Posterior vena cava (tissue), 2 donors: ENCODE measurements at regions of chr2 and their contacts with region 1.

Region 1: GRCh38 chr2:191501561-191502168 is 176.3 kb upstream of the NABP1 start:
- DNase-seq: no peak

Region 2: DNA sequence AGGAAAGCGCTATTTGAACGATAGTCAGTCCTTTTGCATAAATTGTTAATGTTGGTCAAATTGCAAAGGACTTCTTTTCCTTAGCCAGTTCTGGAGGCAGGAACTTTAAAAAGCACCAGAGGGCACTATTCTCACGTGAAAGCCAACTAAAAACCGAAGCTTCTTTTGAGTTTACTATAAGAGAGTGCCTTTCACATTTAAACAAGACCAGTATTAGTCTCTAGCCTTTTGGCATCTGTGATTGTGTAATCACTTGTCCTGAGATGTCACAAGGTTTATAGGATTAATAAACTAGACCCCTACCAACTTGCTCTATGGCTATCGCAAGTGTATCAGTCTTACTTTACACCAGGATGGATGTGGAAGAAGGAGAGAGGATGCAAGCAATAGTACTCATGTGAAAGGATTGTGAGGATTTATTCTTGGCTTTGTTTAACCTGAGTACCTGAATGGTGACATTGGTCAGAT is 336.5 kb before region 1 on chr2:
- intact Hi-C with region 1: loop called (anchors 5 to 10 kb)
- DNase-seq: no peak

Region 3: DNA sequence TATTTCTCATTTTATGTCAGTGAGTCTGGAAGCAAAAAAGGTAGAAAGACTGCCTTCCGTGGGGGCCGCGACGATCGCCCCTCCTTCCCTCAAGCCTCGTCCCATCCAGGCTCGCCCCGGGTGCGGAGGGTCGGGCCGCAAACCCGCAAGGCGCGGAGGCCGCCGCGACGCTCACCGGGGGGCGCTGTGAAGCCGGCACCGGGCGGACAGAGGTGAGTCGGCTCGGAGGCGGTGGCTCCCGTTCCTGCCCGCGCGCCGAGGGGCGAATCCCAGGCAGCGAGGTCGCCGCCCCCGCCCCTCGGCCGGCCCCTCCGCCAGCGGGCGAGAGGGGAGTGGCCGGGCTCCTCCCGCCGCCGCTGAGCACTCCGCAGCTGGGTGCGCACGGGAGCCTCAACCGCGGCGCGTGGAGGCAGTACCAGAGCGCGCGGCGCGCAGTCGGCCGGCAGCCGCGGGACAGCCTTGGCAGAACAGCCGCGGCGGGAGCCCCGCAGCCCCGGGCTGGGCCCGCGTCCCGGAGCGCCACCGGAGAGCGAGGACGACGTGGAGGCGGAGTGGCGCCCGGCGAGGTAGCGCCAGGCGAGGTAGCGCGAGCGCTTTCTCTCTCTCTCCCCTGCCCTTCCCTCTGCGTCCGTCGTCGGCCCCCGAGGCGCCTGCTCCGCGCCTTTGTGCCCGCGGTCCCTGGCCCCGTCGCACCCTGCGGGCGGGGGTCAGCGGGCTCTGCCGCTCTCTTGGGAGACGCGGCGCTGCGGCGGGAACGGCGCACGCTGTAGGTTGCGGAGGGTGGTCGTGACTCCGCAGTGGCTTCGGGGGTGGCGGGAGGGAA is 256.4 kb before region 1 on chr2 and contains the start of gene MYO1B:
- intact Hi-C with region 1: loop called (anchors 10 kb)
- DNase-seq: no peak
- total RNA-seq, gene MYO1B: 29.8 to 30.0 TPM